Activated naive CD4-positive, alpha-beta T cell treated with anti-CD3 and anti-CD28 coated beads for 36 hours (primary cell): ENCODE measurements at regions of chr18 and their contacts with region 1.

Region 1: DNA sequence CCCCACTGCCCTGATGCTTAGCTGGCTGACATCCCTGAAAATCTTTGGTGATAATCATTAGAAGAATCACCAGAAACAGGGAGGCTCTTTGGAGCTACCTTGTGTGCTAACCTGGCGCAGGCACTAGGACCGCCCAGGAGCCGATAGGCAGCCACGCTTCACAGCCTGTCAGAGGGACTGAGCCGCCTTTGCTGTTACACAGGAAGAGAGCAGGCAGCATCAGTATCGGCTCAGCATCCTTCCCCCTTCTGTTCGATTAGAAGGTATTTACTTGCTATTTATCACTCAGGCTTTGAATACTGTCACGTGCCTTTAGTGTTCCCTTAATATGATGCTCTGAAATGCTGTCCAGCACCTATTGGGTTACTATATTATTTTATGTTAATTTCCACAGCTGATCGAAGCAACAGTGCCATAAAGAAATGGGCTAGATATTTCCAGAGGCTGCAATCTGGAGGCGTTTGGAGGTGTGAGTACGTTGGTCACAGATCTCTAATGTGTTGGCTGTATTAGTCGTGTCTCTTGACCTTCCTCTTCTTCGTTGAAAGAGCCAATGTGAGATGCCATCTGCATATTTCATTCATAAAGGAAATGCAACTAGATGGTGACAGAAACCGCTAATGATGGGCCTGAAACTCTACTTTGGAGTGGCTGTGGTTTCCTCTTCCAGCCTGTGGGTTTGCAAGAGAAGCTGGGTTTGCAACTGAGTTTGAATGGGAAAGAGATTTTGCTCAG is 110.4 kb upstream of the RAB27B start:
- DNase-seq: peak; percentile 69
- H3K4me3 Mint-ChIP-seq: peak overlapping the region; percentile 60
- H3K27ac Mint-ChIP-seq: no peak overlapping the region
- H3K4me1 Mint-ChIP-seq: peaks cover 33% of the 10 kb centered on the region
- H3K27me3 Mint-ChIP-seq: peaks cover 12% of the 10 kb centered on the region

Region 2: DNA sequence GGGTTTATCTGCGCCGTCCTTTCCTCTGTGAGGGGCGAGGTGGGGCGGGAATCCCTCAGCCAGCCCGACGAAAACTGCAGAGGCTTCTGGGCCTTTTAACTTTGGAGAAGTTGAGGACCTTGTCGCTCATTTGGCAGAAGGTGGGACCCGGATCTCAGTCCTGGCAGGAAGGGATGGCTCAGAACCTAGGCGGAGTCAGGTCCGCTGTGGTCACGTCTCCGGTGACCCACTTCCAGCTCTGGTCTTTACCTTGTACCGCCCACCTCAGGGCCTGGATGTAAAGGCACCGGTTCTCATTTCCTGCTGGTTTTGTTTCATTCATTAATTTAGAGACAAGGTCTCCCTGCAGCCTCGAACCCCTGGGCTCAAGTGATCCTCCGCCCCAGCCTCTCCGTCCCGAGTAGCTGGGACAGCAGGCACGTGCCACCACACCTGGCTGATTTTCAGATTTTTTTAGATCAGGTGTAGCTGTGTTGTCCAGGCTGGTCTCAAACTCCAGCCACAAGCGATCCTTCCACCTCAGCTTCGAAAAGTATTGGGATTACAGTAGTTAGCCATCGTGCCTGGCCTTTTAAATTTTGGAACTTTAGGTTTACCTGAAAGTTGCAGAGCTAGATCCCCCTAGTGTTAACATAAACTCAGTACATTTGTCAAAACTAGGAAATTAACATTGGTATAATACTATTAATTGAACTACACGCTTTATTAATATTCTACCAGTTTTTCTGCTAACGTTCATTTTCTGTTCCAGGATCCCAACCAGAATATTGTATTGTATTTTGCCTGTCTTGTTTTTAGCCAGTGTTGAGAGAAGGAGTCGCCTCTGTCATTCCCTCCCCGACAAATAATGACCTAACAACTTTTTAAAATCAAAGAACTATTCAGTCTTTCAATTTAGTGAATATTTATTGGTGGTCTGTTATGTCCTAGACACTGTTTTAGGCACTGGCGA is 447.7 kb before region 1 on chr18:
- CTCF ChIA-PET with region 1: no interaction called
- intact Hi-C with region 1: loop called (anchors 10 kb)
- DNase-seq: peak; percentile 62
- H3K4me3 Mint-ChIP-seq: peak overlapping the region; percentile 83
- H3K27ac Mint-ChIP-seq: peak overlapping the region; percentile 94
- H3K4me1 Mint-ChIP-seq: peaks cover 24% of the 10 kb centered on the region
- H3K27me3 Mint-ChIP-seq: no peaks in the 10 kb centered on the region

Region 3: GRCh38 chr18:54776282-54776977 is 58.6 kb after region 1 on chr18:
- CTCF ChIA-PET with region 1: no interaction called
- intact Hi-C with region 1: loop called (anchors 2 kb)
- DNase-seq: peak; percentile 56
- H3K4me3 Mint-ChIP-seq: no peak overlapping the region
- H3K27ac Mint-ChIP-seq: no peak overlapping the region
- H3K4me1 Mint-ChIP-seq: peaks cover 3% of the 10 kb centered on the region
- H3K27me3 Mint-ChIP-seq: peaks cover 2% of the 10 kb centered on the region

Region 4: GRCh38 chr18:54828281-54828881 is 110.5 kb after region 1 on chr18 and contains the start of gene RAB27B:
- CTCF ChIA-PET with region 1: no interaction called
- intact Hi-C with region 1: loop called (anchors 1 kb)
- DNase-seq: peak; percentile 85
- H3K4me3 Mint-ChIP-seq: peak within 1 kb of the TSS; percentile 75
- H3K27ac Mint-ChIP-seq: peak within 1 kb of the TSS; percentile 4
- H3K4me1 Mint-ChIP-seq: peaks cover 18% of the 10 kb centered on the region
- H3K27me3 Mint-ChIP-seq: no peaks in the 10 kb centered on the region
- total RNA-seq, gene RAB27B: 0.52 TPM in 1 of 2 experiments, not detected in the other

Region 5: GRCh38 chr18:54946149-54946581 is 228.3 kb after region 1 on chr18:
- CTCF ChIA-PET with region 1: no interaction called
- intact Hi-C with region 1: loop called (anchors 1 kb)
- DNase-seq: peak; percentile 28
- H3K4me3 Mint-ChIP-seq: peak overlapping the region; percentile 82
- H3K27ac Mint-ChIP-seq: peak overlapping the region; percentile 73
- H3K4me1 Mint-ChIP-seq: peaks cover 14% of the 10 kb centered on the region
- H3K27me3 Mint-ChIP-seq: no peaks in the 10 kb centered on the region

Region 6: DNA sequence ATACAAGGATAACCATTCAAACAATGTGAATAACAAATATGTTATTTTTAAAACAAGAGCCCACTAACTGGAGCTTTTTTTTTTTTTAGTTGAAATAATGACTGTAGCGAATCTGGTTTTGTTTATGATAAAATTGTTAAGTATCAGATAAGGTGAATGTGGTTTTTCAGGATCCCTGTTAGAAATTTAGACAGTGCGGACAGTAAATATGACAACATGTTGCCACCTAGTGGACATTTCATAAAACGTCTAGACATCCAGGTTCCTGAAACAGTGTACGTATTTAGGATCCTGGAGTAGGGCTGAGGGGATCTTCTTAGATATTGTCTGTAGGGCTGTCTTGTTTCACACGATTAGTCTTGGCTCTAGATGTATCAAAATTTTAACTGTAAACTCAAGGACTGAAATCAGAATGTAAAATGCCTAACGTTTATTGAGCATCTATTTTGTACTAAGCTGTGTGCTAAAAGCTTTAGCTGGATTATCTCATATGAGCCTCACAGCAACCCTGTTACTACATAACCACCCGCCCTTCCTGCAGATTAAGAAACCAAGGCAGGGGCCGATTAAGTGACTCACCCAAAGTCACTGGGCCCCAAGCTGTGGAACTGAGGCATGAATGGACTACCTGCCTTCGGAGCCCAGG is 265.3 kb after region 1 on chr18:
- CTCF ChIA-PET with region 1: no interaction called
- intact Hi-C with region 1: loop called (anchors 1 kb)
- DNase-seq: no peak
- H3K4me3 Mint-ChIP-seq: no peak overlapping the region
- H3K27ac Mint-ChIP-seq: no peak overlapping the region
- H3K4me1 Mint-ChIP-seq: no peaks in the 10 kb centered on the region
- H3K27me3 Mint-ChIP-seq: no peaks in the 10 kb centered on the region

Region 7: DNA sequence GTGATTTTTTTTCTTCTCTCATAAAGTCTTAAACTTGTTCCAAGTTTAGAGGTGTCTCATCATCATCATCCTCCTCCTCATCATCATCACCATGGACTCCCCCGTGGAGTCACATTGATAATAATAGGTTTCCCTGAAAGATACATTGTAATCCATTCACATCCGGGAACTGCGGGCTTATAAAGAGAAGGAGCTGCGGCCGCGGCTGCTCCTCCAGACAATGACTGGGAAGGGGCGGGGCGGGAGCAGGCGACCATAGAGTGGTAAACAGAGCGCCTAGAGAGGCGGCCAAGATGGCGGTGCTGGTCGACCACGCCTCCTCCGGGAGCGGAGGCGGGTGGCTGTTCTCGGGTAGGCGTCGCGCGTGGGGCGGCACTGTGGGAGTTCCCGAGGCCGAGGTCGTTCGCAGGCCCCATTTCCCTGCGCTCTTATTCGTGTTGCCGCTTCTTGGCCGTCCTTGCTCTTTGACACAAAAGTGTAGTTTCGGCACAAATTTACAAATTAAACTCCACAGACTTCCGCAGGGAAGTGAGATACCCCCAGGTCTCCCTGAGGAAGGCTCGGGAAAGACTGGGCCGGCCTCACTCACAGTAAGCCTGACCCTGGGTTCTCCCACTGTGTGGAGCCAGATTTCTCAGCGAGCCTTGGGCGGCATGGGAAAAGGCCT is 871.9 kb after region 1 on chr18:
- CTCF ChIA-PET with region 1: no interaction called
- intact Hi-C with region 1: loop called (anchors 10 kb)
- DNase-seq: peak; percentile 86
- H3K4me3 Mint-ChIP-seq: peak overlapping the region; percentile 70
- H3K27ac Mint-ChIP-seq: no peak overlapping the region
- H3K4me1 Mint-ChIP-seq: peaks cover 19% of the 10 kb centered on the region
- H3K27me3 Mint-ChIP-seq: peaks cover 59% of the 10 kb centered on the region